Activated CD4-positive, alpha-beta T cell treated with anti-CD3 and anti-CD28 coated beads for 36 hours (primary cell): ENCODE measurements at regions of chr7 and their contacts with region 1.

Region 1: GRCh38 chr7:23003505-23004246 is 10.3 kb downstream of the HYCC1 start:
- DNase-seq: no peak
- ATAC-seq: no peak
- H3K4me3 Mint-ChIP-seq: no peak overlapping the region
- H3K27ac Mint-ChIP-seq: no peak overlapping the region
- H3K4me1 Mint-ChIP-seq: peaks cover 22% of the 10 kb centered on the region
- H3K27me3 Mint-ChIP-seq: no peaks in the 10 kb centered on the region

Region 2: GRCh38 chr7:22992874-22993840 is 10.5 kb before region 1 on chr7:
- CTCF ChIA-PET with region 1: no interaction called
- POLR2A ChIA-PET with region 1: no interaction called
- intact Hi-C with region 1: loop called in 1 of 2 experiments (anchors 1 kb)
- DNase-seq: peak; percentile 63
- ATAC-seq: peak; percentile 58
- H3K4me3 Mint-ChIP-seq: no peak overlapping the region
- H3K27ac Mint-ChIP-seq: no peak overlapping the region
- H3K4me1 Mint-ChIP-seq: peaks cover 39% of the 10 kb centered on the region
- H3K27me3 Mint-ChIP-seq: no peaks in the 10 kb centered on the region